ENCODE measurements at regions of chr2 and their contacts with region 1.

Region 1: GRCh38 chr2:65432227-65433190 is at the start of gene SPRED2:
- DNase-seq: peak; percentile 92
- H3K4me3 ChIP-seq: peak within 1 kb of the TSS; percentile 88
- H3K27ac ChIP-seq: peak within 1 kb of the TSS; percentile 84
- H3K4me1 ChIP-seq: peaks cover 4% of the 10 kb centered on the region
- H3K27me3 ChIP-seq: no peaks in the 10 kb centered on the region
- CTCF ChIP-seq: no peak
- total RNA-seq, gene SPRED2: 36.9 to 47.8 TPM

Region 2: GRCh38 chr2:65264821-65265670 is 167.5 kb before region 1 on chr2:
- intact Hi-C with region 1: loop called (anchors 10 kb)
- DNase-seq: peak; percentile 55
- H3K4me3 ChIP-seq: no peak overlapping the region
- H3K27ac ChIP-seq: no peak overlapping the region
- H3K4me1 ChIP-seq: no peaks in the 10 kb centered on the region
- H3K27me3 ChIP-seq: no peaks in the 10 kb centered on the region
- CTCF ChIP-seq: peak; percentile 49

Region 3: GRCh38 chr2:65382776-65383357 is 49.6 kb before region 1 on chr2:
- intact Hi-C with region 1: loop called (anchors 5 kb)
- DNase-seq: peak; percentile 92
- H3K4me3 ChIP-seq: no peak overlapping the region
- H3K27ac ChIP-seq: peak overlapping the region; percentile 79
- H3K4me1 ChIP-seq: peaks cover 20% of the 10 kb centered on the region
- H3K27me3 ChIP-seq: no peaks in the 10 kb centered on the region
- CTCF ChIP-seq: peak; percentile 22

Measured in colonic mucosa (tissue), 4 donors.